ENCODE measurements at regions of chr13 and their contacts with region 1.

Region 1: GRCh38 chr13:68810660-68811059 is 1297.0 kb upstream of the ATXN8OS start:
- DNase-seq: no peak
- H3K4me3 Mint-ChIP-seq: no peak overlapping the region
- H3K27ac Mint-ChIP-seq: no peak overlapping the region
- H3K4me1 Mint-ChIP-seq: no peaks in the 10 kb centered on the region
- H3K27me3 Mint-ChIP-seq: no peaks in the 10 kb centered on the region
- CTCF ChIP-seq: no peak

Region 2: DNA sequence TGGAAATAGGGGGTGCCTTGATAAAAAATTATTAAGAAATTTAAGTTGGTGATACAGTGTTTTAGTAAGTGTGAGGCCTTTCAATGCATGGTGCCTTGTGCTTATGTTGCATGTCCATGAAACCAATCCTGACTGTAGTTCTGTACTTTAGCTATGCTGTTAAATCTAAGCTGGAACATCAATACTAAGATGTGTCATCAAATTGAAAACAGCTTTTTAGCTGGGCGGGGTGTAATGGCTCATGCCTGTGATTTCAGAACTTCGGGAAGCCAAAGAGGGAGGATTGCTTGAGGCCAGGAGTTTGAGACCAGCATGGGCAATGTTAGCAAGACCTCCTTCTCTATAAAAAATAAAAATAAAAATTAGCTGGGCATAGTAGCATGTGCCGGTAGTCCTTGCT is 650.2 kb before region 1 on chr13:
- CTCF ChIA-PET with region 1: no interaction called
- intact Hi-C with region 1: no loop called
- DNase-seq: no peak
- H3K4me3 Mint-ChIP-seq: no peak overlapping the region
- H3K27ac Mint-ChIP-seq: no peak overlapping the region
- H3K4me1 Mint-ChIP-seq: no peaks in the 10 kb centered on the region
- H3K27me3 Mint-ChIP-seq: no peaks in the 10 kb centered on the region
- CTCF ChIP-seq: no peak

Region 3: GRCh38 chr13:68927387-68928026 is 116.8 kb after region 1 on chr13:
- CTCF ChIA-PET with region 1: interaction called, 3 read pairs
- intact Hi-C with region 1: loop called (anchors 2 kb)
- DNase-seq: peak; percentile 2
- H3K4me3 Mint-ChIP-seq: no peak overlapping the region
- H3K27ac Mint-ChIP-seq: no peak overlapping the region
- H3K4me1 Mint-ChIP-seq: no peaks in the 10 kb centered on the region
- H3K27me3 Mint-ChIP-seq: no peaks in the 10 kb centered on the region
- CTCF ChIP-seq: no peak

Region 4: DNA sequence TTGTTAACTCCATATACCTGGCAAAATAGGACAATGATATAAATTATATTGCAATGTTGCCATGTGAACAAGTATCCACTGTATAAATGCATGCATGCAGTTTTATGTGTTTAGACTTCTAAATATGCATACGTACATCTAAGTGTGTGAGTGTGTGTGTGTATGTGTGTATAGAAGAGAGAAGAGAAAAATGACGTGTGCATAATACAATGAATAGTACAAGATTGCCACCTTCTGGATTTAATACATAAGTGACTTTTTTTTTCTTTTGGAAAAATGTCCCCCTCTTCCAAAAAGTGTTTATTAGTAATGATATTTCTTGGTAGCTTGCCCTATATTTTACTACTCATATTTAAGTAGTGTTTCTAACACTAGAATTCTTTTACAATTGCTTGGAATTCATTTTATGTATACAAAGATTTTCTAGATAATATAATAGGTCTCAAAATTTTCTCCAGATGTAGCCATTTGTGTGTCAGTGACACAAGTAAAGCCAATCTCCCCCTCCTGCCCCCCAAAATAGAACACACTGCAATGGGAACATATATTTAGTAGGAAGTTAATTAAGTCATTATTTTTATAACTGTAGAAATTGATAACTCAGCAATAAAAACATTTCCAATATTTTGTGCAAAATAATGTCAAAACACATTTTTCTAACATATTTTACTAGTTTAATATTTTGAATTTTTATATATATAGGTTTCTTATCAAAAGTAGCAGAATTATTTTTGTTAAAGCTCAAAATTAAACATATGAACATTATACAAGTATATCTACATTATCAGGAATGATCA is 513.6 kb after region 1 on chr13:
- CTCF ChIA-PET with region 1: no interaction called
- intact Hi-C with region 1: loop called (anchors 10 kb)
- DNase-seq: no peak
- H3K4me3 Mint-ChIP-seq: no peak overlapping the region
- H3K27ac Mint-ChIP-seq: no peak overlapping the region
- H3K4me1 Mint-ChIP-seq: no peaks in the 10 kb centered on the region
- H3K27me3 Mint-ChIP-seq: no peaks in the 10 kb centered on the region
- CTCF ChIP-seq: no peak